GM10248 (cell line): ENCODE measurements at regions of chr12 and their contacts with region 1.

Region 1: GRCh38 chr12:12736759-12737676 is 19.9 kb downstream of the CDKN1B start:
- DNase-seq: no peak
- CTCF ChIP-seq: peak; percentile 52

Region 2: GRCh38 chr12:12282761-12283425 is 454.1 kb before region 1 on chr12:
- CTCF ChIA-PET with region 1: no interaction called
- POLR2A ChIA-PET with region 1: no interaction called
- DNase-seq: no peak
- CTCF ChIP-seq: no peak

Region 3: GRCh38 chr12:12376646-12377448 is 360.2 kb before region 1 on chr12:
- CTCF ChIA-PET with region 1: interaction called, 43 read pairs
- POLR2A ChIA-PET with region 1: no interaction called
- DNase-seq: peak; percentile 77
- CTCF ChIP-seq: peak; percentile 46

Region 4: DNA sequence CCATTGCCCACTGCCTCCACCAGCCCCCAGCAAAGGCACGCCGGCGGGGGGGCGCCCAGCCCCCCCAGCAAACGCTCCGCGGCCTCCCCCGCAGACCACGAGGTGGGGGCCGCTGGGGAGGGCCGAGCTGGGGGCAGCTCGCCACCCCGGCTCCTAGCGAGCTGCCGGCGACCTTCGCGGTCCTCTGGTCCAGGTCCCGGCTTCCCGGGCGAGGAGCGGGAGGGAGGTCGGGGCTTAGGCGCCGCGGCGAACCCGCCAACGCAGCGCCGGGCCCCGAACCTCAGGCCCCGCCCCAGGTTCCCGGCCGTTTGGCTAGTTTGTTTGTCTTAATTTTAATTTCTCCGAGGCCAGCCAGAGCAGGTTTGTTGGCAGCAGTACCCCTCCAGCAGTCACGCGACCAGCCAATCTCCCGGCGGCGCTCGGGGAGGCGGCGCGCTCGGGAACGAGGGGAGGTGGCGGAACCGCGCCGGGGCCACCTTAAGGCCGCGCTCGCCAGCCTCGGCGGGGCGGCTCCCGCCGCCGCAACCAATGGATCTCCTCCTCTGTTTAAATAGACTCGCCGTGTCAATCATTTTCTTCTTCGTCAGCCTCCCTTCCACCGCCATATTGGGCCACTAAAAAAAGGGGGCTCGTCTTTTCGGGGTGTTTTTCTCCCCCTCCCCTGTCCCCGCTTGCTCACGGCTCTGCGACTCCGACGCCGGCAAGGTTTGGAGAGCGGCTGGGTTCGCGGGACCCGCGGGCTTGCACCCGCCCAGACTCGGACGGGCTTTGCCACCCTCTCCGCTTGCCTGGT is 20.0 kb before region 1 on chr12 and contains the start of gene CDKN1B:
- CTCF ChIA-PET with region 1: interaction called, 72 read pairs
- POLR2A ChIA-PET with region 1: interaction called, 3 read pairs
- DNase-seq: peak; percentile 87
- CTCF ChIP-seq: no peak

Region 5: DNA sequence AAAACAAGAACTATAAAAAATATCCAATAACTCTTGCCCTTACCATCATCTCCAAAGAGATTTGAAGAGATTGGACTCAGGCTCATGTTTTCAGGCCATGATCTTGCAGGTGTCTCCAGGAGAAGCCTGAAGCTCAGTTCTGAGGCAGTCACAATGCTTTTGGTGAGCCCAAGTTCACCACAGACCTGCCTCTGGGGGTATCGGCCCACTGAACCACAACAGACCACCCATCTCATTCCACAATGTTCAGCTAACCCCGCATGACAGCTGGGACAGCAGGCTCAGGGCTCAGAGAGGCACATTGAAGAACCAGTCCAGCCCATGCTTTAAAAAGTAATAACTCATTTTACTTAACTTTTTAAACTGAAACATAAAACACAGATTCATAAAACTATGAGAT is 20.1 kb after region 1 on chr12:
- CTCF ChIA-PET with region 1: interaction called, 26 read pairs
- POLR2A ChIA-PET with region 1: no interaction called
- DNase-seq: no peak
- CTCF ChIP-seq: no peak

Region 6: DNA sequence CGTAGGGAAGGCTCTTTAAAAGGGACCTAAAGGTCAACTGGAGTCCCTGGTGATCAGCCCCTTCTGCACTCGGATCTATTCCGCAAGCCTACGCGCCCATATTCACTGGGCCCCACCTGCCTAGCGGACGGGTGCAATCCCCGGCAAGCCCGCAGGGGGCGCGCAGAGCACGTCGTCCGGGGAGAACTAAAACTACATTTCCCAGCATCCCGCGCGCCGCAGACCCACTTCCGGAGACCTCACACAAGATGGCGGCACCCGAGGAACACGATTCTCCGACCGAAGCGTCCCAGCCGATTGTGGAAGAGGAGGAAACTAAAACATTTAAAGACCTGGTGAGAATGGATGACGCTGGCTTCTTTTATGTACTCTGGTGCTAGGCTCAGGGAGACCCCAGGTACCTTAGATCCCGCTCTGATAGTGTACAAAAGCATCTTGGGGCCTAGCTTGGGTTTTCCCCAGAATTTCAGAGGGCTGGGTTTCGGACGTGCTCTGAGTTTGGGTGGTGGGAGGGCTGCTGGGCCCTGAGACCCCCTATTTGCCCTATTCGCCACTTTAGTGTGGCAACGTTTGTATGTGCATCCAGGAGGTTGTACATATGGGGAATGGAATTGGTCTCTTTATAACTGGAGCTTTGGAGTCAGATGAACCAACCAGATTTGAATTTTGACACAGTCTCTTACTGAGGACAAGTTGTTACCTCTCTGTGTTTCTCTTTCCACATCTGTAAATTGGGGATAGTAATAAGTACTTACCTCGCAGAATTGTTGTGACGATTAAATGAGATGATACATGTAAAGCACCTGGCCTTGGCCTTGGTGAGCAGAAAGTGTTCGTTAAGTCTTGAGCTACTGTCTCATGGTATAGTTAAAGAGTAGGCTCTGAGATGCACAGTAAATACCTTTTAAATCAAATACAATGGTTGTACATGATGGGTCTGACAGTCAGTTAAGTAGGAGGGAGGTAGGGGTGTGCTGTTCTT is 76.4 kb after region 1 on chr12 and contains the start of gene DDX47:
- CTCF ChIA-PET with region 1: interaction called, 18 read pairs
- POLR2A ChIA-PET with region 1: no interaction called
- DNase-seq: peak; percentile 92
- CTCF ChIP-seq: peak; percentile 98

Region 7: DNA sequence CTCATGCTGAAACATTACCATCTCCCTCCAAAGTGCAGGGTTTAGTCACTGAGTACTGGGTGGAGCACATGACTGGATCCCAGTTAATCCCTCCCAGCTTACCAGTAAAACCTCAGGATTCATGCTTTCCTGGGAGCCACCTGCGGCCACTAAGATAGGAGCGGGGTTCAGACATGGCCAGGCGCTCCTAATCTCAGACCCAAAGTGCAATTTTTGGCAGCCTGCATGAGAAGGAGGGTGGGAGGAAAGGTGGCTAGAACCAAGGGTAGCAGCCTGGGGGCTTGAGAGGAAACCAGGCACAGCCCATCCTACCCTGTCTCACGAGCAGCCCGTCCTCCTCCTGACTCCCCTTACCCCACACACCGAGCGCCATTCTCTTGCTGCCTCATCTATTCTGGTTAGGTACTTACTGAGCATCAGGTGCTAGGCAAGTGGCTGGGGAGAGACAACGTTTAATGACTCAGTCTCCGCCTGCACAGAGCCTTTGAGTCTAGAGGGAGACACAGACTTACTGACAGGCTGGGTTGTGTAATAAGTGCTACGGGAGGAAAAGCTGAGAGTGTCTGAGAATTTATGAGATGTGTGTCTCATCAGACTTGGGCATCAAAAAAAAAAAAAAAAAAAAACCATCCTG is 164.3 kb after region 1 on chr12:
- CTCF ChIA-PET with region 1: no interaction called
- POLR2A ChIA-PET with region 1: no interaction called
- DNase-seq: no peak
- CTCF ChIP-seq: no peak